ENCODE measurements at regions of chr18 and their contacts with region 1.

Region 1: DNA sequence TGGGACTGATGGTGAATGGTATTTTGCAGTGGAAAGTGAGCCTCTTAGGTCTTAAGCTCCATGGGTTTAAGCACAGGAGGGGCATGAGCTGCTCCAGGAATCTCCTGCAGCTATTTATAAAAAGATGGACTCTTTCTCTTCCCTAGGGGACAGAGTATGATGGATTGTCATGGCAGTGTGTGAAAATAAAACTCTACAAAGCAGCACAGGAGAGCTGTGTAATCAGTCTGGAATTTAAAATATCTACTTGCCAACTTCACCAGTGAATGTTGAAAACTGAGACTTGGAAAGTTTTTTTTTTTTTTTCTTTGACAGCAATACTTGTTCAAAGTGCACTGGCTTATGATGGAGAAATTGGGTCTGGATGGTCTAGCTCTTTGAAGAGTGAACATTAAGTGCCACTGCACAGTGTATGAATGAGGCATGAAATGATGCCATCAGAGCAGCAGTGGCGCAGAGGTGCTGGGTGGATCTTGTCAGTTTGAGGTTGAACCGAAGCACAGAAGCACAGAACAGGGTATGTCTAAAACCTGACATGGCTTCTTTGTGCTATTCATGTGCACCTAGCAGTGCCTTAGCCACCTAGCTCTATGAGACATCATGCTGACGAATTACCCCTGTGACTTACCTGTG is 245.4 kb downstream of the PTPRM start:
- DNase-seq: no peak
- H3K4me3 ChIP-seq: no peak overlapping the region
- H3K27ac ChIP-seq: no peak overlapping the region
- H3K4me1 ChIP-seq: peaks cover 0 to 7% (median 0%) of the 10 kb centered on the region in 4 donors
- H3K27me3 ChIP-seq: no peaks in the 10 kb centered on the region
- CTCF ChIP-seq: no peak
- EP300 ChIP-seq: no peak
- POLR2A ChIP-seq: no peak

Region 2: GRCh38 chr18:7617738-7618422 is 194.7 kb before region 1 on chr18:
- in situ Hi-C with region 1: no loop called
- intact Hi-C with region 1: no loop called
- DNase-seq: peak; percentile 41
- H3K4me3 ChIP-seq: no peak overlapping the region
- H3K27ac ChIP-seq: peak overlapping the region; percentile 20 to 63 (median 46)
- H3K4me1 ChIP-seq: peaks cover 0 to 26% (median 10%) of the 10 kb centered on the region in 4 donors
- H3K27me3 ChIP-seq: no peaks in the 10 kb centered on the region
- CTCF ChIP-seq: no peak
- EP300 ChIP-seq: no peak
- POLR2A ChIP-seq: no peak

Region 3: DNA sequence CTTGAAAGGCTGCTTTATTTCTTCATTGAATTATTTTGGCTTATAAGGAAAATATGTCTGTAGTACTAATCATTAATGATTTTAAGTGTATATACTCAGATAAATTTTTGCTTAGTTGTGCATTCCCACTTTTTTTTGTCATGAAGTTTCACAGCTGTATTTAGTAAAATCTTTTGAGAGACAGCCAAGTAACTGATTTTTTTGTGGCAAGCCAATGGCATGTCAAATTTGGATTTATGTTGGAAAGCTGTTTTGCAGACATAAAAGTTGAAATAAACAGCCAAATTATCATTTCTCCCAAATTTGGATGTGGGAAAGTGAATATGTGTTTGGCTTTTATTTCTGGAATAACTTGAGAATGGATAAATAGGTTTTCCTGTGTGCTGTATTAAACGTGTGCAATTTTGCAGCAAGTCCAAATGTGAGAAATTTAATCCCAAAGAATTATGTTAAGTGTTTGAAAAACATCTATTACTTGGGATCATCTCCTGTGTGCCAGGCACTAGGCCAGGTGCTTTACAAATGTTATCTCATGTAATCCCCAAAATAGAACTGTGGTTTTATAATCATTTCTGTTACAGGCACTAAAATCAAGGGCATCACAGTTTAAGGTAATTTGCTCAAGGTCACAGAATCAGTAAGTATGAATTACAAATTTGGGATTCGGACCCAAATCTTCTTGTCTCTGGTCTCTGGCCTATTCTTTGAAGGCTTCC is 85.0 kb before region 1 on chr18:
- in situ Hi-C with region 1: no loop called
- intact Hi-C with region 1: no loop called
- DNase-seq: no peak
- H3K4me3 ChIP-seq: no peak overlapping the region
- H3K27ac ChIP-seq: no peak overlapping the region
- H3K4me1 ChIP-seq: peaks cover 0 to 3% (median 0%) of the 10 kb centered on the region in 4 donors
- H3K27me3 ChIP-seq: no peaks in the 10 kb centered on the region
- CTCF ChIP-seq: no peak
- EP300 ChIP-seq: no peak
- POLR2A ChIP-seq: no peak

Region 4: GRCh38 chr18:7921938-7922587 is 109.5 kb after region 1 on chr18:
- in situ Hi-C with region 1: loop called in 1 of 4 experiments (anchors 25 kb)
- intact Hi-C with region 1: no loop called
- DNase-seq: no peak
- H3K4me3 ChIP-seq: no peak overlapping the region
- H3K27ac ChIP-seq: peak overlapping the region in 2 of 4 donors; percentile 5 to 22
- H3K4me1 ChIP-seq: peaks cover 0 to 6% (median 0%) of the 10 kb centered on the region in 4 donors
- H3K27me3 ChIP-seq: no peaks in the 10 kb centered on the region
- CTCF ChIP-seq: no peak
- EP300 ChIP-seq: no peak
- POLR2A ChIP-seq: no peak

Region 5: GRCh38 chr18:8003878-8004675 is 191.5 kb after region 1 on chr18:
- in situ Hi-C with region 1: no loop called
- intact Hi-C with region 1: no loop called
- DNase-seq: no peak
- H3K4me3 ChIP-seq: no peak overlapping the region
- H3K27ac ChIP-seq: no peak overlapping the region
- H3K4me1 ChIP-seq: no peaks in the 10 kb centered on the region
- H3K27me3 ChIP-seq: no peaks in the 10 kb centered on the region
- CTCF ChIP-seq: no peak
- EP300 ChIP-seq: no peak
- POLR2A ChIP-seq: no peak

Region 6: DNA sequence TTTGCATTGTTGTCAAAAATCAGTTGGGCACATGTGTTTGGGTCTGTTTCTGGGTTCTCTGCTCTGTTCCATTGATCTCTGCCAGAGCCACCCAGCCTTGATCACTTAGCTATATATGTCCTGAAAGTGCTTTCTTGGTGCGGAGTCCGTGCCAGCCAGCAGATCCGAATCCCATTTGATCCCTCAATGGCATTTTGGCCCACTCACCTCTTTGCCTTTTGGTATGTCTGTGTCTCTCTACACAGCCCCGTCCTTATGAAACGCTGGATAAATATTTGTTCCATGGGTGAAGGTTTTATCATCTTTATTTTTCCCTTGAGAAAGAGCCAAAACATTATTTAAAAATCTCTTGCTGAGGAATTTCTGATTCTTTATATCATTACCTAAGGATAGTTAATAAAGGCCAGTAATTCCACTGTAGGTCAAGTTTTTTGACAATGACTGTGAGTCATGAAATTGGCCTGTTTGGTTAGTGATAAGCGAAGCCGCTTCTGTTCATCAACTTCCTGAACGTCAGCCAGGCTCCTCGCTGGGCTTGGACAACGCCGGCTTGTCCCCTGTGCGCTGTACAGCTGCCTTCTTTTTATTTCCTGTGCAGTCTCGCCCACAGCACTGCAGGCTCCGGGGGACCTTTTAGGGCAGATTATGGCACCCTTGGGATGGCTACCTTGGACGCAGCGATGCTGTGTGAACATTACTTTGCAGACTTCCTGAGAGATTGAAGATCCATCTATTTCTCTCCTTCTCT is 917.7 kb after region 1 on chr18:
- in situ Hi-C with region 1: no loop called
- intact Hi-C with region 1: no loop called
- DNase-seq: peak; percentile 59
- H3K4me3 ChIP-seq: no peak overlapping the region
- H3K27ac ChIP-seq: peak overlapping the region; percentile 20 to 48 (median 39)
- H3K4me1 ChIP-seq: peaks cover 0 to 15% (median 13%) of the 10 kb centered on the region in 4 donors
- H3K27me3 ChIP-seq: peaks cover 33% of the 10 kb centered on the region
- CTCF ChIP-seq: no peak
- EP300 ChIP-seq: no peak
- POLR2A ChIP-seq: no peak

Measured in transverse colon (tissue), 4 donors.